MCF 10A (cell line): ENCODE measurements at regions of chr1 and their contacts with region 1.

Region 1: DNA sequence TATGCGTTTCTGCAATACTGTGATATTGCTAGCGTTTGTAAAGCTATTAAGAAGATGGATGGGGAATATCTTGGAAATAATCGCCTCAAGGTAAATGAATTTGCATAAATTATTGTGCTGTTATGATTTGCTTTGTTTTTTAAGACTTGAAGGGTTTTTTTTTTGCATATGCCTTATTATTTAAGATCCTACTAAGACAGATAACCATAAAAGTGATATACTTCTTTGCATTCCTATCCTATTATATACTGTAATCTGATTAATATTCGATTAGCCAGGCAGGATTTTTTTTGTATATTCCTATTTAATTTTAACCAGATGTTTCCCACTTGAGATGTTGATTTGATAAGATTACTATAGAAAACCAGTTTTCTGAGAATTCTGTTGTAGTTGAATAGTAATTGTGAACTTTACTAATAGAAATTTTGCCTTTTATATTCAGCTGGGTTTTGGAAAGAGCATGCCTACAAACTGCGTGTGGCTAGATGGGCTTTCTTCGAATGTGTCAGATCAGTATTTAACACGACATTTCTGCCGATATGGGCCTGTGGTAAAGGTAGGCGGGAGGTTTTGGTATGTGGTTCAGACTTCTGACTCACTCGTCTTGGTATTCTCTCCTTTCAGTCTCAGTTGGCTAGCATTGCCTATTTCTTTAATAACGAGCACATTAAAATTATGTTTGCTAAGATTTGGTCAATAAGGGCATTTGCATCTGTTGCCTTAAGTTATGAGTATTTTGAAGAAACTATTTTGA is 56.8 kb downstream of the ZBTB17 start:
- DNase-seq: peak; percentile 79
- H3K4me3 Mint-ChIP-seq: peak overlapping the region; percentile 5
- H3K27ac Mint-ChIP-seq: peak overlapping the region; percentile 41
- H3K4me1 Mint-ChIP-seq: peaks cover 23% of the 10 kb centered on the region
- H3K27me3 Mint-ChIP-seq: no peaks in the 10 kb centered on the region
- CTCF ChIP-seq: no peak

Region 2: GRCh38 chr1:15807121-15807520 is 112.0 kb before region 1 on chr1:
- CTCF ChIA-PET with region 1: no interaction called
- POLR2A ChIA-PET with region 1: no interaction called
- intact Hi-C with region 1: no loop called
- DNase-seq: no peak
- H3K4me3 Mint-ChIP-seq: no peak overlapping the region
- H3K27ac Mint-ChIP-seq: no peak overlapping the region
- H3K4me1 Mint-ChIP-seq: peaks cover 9% of the 10 kb centered on the region
- H3K27me3 Mint-ChIP-seq: no peaks in the 10 kb centered on the region
- CTCF ChIP-seq: no peak

Region 3: GRCh38 chr1:15885701-15886610 is 33.2 kb before region 1 on chr1:
- CTCF ChIA-PET with region 1: interaction called, 4 read pairs
- POLR2A ChIA-PET with region 1: interaction called, 10 read pairs
- intact Hi-C with region 1: no loop called
- DNase-seq: peak; percentile 94
- H3K4me3 Mint-ChIP-seq: peak overlapping the region; percentile 74
- H3K27ac Mint-ChIP-seq: peak overlapping the region; percentile 79
- H3K4me1 Mint-ChIP-seq: peaks cover 18% of the 10 kb centered on the region
- H3K27me3 Mint-ChIP-seq: no peaks in the 10 kb centered on the region
- CTCF ChIP-seq: peak; percentile 33